ENCODE measurements at regions of chr12 and their contacts with region 1.

Region 1: DNA sequence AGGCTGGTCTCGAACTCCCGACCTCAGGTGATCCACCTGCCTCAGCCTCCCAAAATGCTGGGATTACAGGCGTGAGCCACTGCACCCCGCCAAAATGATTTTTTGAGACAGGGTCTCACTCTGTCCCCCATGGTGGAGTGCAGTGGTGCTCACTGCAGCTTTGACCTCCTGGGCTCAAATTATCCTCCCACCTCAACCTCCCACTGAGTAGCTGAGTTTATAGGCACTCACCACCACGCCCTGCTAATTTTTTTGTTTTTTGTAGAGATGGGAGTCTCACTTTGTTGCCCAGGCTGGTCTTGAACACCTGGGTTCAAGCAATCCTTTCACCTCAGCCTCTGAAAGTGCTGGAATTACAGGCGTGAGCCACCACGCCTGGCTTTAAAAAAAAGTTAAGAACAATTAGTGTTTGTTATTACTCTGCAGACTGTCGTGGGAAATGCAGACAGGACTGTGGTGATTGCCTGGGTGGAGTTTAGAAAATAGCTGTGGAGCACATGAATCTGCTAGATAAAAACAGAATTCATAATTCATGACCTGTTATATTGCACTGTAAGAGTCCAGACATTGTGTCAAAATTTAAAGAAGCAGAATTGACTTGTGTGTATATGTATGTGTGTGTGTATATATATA is 9.2 kb upstream of the COX6A1 start:
- DNase-seq: no peak
- H3K4me3 Mint-ChIP-seq: no peak overlapping the region
- H3K27ac Mint-ChIP-seq: no peak overlapping the region
- H3K4me1 Mint-ChIP-seq: peaks cover 5% of the 10 kb centered on the region
- H3K27me3 Mint-ChIP-seq: no peaks in the 10 kb centered on the region
- CTCF ChIP-seq: no peak

Region 2: DNA sequence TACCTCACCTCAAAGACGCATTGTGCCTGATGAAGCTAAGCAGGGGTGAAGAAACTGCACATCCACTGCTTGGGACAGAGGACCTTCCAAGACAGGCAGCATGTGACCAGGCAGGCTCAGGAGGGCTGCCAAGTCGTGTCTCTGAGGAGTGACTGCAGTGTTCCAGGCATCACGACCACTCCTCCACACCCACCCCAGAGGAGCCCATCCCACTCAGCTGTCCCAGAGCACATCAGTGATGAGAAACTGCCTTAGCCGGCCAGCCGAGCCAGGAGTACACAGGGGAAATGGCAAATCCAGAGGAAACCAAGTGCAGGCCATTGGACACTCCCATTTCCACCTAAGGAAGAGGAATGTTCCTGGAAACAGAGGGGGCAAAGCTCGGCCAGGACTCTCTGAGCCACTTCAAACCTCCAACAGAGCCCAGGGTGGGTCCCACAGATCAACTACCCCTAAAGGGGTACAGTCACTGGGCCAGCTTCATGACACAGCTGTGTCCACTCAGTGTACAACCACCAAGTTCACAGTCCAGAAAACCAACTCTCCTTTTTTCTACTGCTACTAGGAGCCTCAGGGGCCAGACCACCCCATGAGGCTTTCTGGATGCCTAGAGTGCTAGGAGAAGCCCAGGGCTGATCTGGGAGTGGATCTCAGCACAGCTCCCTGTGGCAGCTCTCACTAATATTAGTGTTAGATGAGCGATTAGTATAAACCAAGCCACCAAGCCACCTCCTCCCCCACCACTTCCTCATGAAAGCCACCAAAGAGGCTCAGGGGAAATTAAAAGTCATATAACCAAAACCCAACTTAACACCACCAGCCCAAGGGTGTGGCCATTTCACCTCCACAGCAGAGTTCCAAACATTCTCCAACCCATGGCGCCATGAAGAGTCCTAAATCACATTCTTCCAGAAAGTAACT is 178.6 kb before region 1 on chr12:
- CTCF ChIA-PET with region 1: no interaction called
- POLR2A ChIA-PET with region 1: no interaction called
- intact Hi-C with region 1: no loop called
- DNase-seq: no peak
- H3K4me3 Mint-ChIP-seq: no peak overlapping the region
- H3K27ac Mint-ChIP-seq: peak overlapping the region; percentile 81
- H3K4me1 Mint-ChIP-seq: peaks cover 62% of the 10 kb centered on the region
- H3K27me3 Mint-ChIP-seq: no peaks in the 10 kb centered on the region
- CTCF ChIP-seq: no peak

Region 3: GRCh38 chr12:120327593-120327992 is 101.1 kb before region 1 on chr12 and contains the start of gene PLA2G1B:
- CTCF ChIA-PET with region 1: interaction called, 18 read pairs
- POLR2A ChIA-PET with region 1: no interaction called
- intact Hi-C with region 1: loop called (anchors 10 kb)
- DNase-seq: no peak
- H3K4me3 Mint-ChIP-seq: no peak within 1 kb of the TSS
- H3K27ac Mint-ChIP-seq: no peak within 1 kb of the TSS
- H3K4me1 Mint-ChIP-seq: peaks cover 11% of the 10 kb centered on the region
- H3K27me3 Mint-ChIP-seq: no peaks in the 10 kb centered on the region
- CTCF ChIP-seq: no peak
- total RNA-seq, gene PLA2G1B: not detected in 2 replicates

Region 4: GRCh38 chr12:120416490-120417216 is 12.1 kb before region 1 on chr12:
- CTCF ChIA-PET with region 1: interaction called, 32 read pairs
- POLR2A ChIA-PET with region 1: no interaction called
- intact Hi-C with region 1: no loop called
- DNase-seq: no peak
- H3K4me3 Mint-ChIP-seq: no peak overlapping the region
- H3K27ac Mint-ChIP-seq: no peak overlapping the region
- H3K4me1 Mint-ChIP-seq: no peaks in the 10 kb centered on the region
- H3K27me3 Mint-ChIP-seq: no peaks in the 10 kb centered on the region
- CTCF ChIP-seq: no peak

Measured in MCF 10A (cell line).